Mammary epithelial cell (primary cell): ENCODE measurements at regions of chr9 and their contacts with region 1.

Region 1: GRCh38 chr9:129626079-129626624 is at the start of gene NTMT1:
- DNase-seq: peak; percentile 75
- H3K4me3 ChIP-seq: peak within 1 kb of the TSS; percentile 49 to 100 (median 76)
- H3K27ac ChIP-seq: peak within 1 kb of the TSS; percentile 67
- H3K4me1 ChIP-seq: peaks cover 19% of the 10 kb centered on the region
- H3K27me3 ChIP-seq: no peaks in the 10 kb centered on the region
- CTCF ChIP-seq: no peak
- total RNA-seq, gene NTMT1: 15.0 to 44.6 TPM

Region 2: GRCh38 chr9:129048041-129048440 is 578.1 kb before region 1 on chr9:
- CTCF ChIA-PET with region 1: no interaction called
- dilution Hi-C with region 1: loop called (anchors 5 kb)
- in situ Hi-C with region 1: no loop called
- intact Hi-C with region 1: no loop called
- DNase-seq: no peak
- H3K4me3 ChIP-seq: no peak overlapping the region
- H3K27ac ChIP-seq: no peak overlapping the region
- H3K4me1 ChIP-seq: peaks cover 4% of the 10 kb centered on the region
- H3K27me3 ChIP-seq: no peaks in the 10 kb centered on the region
- CTCF ChIP-seq: no peak

Region 3: GRCh38 chr9:129460323-129461261 is 165.6 kb before region 1 on chr9:
- CTCF ChIA-PET with region 1: no interaction called
- dilution Hi-C with region 1: loop called (anchors 5 kb)
- in situ Hi-C with region 1: no loop called
- intact Hi-C with region 1: no loop called
- DNase-seq: peak; percentile 92
- H3K4me3 ChIP-seq: peak overlapping the region in 2 of 3 experiments; percentile 27 to 48
- H3K27ac ChIP-seq: peak overlapping the region; percentile 63
- H3K4me1 ChIP-seq: peaks cover 28% of the 10 kb centered on the region
- H3K27me3 ChIP-seq: no peaks in the 10 kb centered on the region
- CTCF ChIP-seq: peak in 1 of 2 donors; percentile 4

Region 4: DNA sequence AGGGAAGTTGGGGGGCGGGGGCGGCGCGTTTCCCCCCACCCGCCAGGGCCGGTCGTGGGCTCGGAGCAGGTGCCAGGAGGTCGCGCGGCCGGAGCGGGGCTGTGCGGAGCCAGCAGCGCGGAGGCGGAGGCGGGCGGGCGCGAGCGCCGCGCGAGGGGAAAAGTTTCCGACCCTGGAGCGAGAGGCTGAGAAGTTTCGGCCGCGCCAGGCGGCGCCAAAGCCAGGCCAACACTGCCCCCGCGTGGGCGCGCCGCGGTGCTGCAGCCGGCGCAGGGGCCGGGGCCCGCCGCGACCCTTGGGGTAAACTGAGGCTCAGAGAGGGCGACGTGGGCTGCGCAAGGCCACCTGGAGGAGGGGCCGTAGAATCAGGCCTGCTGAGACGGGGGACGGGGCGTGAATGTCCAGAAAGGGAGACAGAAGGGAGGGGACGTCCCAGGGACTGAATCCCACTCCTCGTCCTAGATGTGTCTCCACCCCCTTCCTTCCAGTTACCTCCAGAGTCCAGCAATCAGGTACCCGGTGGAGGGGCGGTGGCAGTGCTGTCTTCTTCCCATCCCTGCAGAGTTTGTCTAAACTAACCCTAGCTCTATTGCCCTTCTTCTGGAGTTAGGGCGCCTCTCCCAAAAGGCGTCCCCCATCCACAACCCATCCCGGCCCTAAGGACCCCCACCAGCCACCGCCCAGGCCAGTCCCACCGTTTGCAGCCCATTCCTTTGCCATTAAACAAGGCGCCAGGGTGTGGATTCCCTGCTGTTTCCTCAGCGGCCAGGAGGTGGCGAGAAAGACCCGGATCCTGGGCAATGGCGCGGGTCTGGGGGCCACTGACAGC is 15.5 kb before region 1 on chr9:
- CTCF ChIA-PET with region 1: interaction called, 4 read pairs
- dilution Hi-C with region 1: no loop called
- in situ Hi-C with region 1: no loop called
- intact Hi-C with region 1: loop called (anchors 1 kb)
- DNase-seq: peak; percentile 37
- H3K4me3 ChIP-seq: peak overlapping the region; percentile 52 to 62 (median 55)
- H3K27ac ChIP-seq: no peak overlapping the region
- H3K4me1 ChIP-seq: peaks cover 22% of the 10 kb centered on the region
- H3K27me3 ChIP-seq: no peaks in the 10 kb centered on the region
- CTCF ChIP-seq: peak; percentile 80 to 81

Region 5: GRCh38 chr9:129676975-129677841 is 51.1 kb after region 1 on chr9:
- CTCF ChIA-PET with region 1: no interaction called
- dilution Hi-C with region 1: no loop called
- in situ Hi-C with region 1: no loop called
- intact Hi-C with region 1: no loop called
- DNase-seq: no peak
- H3K4me3 ChIP-seq: no peak overlapping the region
- H3K27ac ChIP-seq: no peak overlapping the region
- H3K4me1 ChIP-seq: no peaks in the 10 kb centered on the region
- H3K27me3 ChIP-seq: peaks cover 10% of the 10 kb centered on the region
- CTCF ChIP-seq: no peak

Region 6: GRCh38 chr9:129696938-129697650 is 70.9 kb after region 1 on chr9:
- CTCF ChIA-PET with region 1: no interaction called
- dilution Hi-C with region 1: loop called (anchors 5 kb)
- in situ Hi-C with region 1: no loop called
- intact Hi-C with region 1: no loop called
- DNase-seq: no peak
- H3K4me3 ChIP-seq: peak overlapping the region in 2 of 3 experiments; percentile 31 to 42
- H3K27ac ChIP-seq: no peak overlapping the region
- H3K4me1 ChIP-seq: peaks cover 6% of the 10 kb centered on the region
- H3K27me3 ChIP-seq: peaks cover 19% of the 10 kb centered on the region
- CTCF ChIP-seq: no peak

Region 7: GRCh38 chr9:129776938-129777768 is 151.0 kb after region 1 on chr9:
- CTCF ChIA-PET with region 1: interaction called, 3 read pairs
- dilution Hi-C with region 1: loop called (anchors 5 kb)
- in situ Hi-C with region 1: no loop called
- intact Hi-C with region 1: no loop called
- DNase-seq: peak; percentile 99
- H3K4me3 ChIP-seq: no peak overlapping the region
- H3K27ac ChIP-seq: peak overlapping the region; percentile 26
- H3K4me1 ChIP-seq: peaks cover 27% of the 10 kb centered on the region
- H3K27me3 ChIP-seq: no peaks in the 10 kb centered on the region
- CTCF ChIP-seq: no peak